ENCODE measurements at regions of chr7 and their contacts with region 1.

Region 1: DNA sequence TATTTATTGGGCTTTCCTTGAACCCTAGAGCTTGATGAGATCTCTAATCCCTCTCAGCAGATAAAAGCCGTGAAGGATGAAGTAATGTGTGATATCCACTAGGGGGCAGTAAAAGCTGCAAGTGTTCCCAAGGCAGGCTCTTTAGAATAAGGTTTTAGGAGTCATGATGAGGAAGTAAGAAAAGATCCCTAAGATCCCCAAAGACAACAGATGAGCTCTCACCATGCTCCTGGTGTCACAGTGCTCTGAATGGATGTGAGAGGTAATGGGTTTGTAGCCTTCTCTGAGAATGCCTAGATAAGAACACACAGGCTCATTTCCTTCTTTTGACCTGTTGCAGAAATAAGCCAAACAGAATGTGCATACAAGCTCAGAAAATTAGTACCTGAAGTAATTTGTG is 70.4 kb upstream of the ITPRID1 start:
- DNase-seq: peak in 1 of 10 donors; percentile 18
- H3K4me3 ChIP-seq: no peak overlapping the region
- H3K27ac ChIP-seq: no peak overlapping the region
- H3K27me3 ChIP-seq: peaks cover 0 to 20% (median 0%) of the 10 kb centered on the region in 45 donors
- CTCF ChIP-seq: peak; percentile 70 to 93 (median 85)

Region 2: GRCh38 chr7:31234836-31235605 is 208.4 kb before region 1 on chr7:
- intact Hi-C with region 1: no loop called
- DNase-seq: no peak
- H3K4me3 ChIP-seq: no peak overlapping the region
- H3K27ac ChIP-seq: no peak overlapping the region
- H3K27me3 ChIP-seq: no peaks in the 10 kb centered on the region
- CTCF ChIP-seq: no peak

Region 3: GRCh38 chr7:31493714-31494181 is 50.3 kb after region 1 on chr7:
- intact Hi-C with region 1: loop called in 1 of 2 experiments (anchors 5 kb)
- DNase-seq: no peak
- H3K4me3 ChIP-seq: no peak overlapping the region
- H3K27ac ChIP-seq: no peak overlapping the region
- H3K27me3 ChIP-seq: peaks cover 0 to 9% (median 0%) of the 10 kb centered on the region in 45 donors
- CTCF ChIP-seq: no peak

Region 4: DNA sequence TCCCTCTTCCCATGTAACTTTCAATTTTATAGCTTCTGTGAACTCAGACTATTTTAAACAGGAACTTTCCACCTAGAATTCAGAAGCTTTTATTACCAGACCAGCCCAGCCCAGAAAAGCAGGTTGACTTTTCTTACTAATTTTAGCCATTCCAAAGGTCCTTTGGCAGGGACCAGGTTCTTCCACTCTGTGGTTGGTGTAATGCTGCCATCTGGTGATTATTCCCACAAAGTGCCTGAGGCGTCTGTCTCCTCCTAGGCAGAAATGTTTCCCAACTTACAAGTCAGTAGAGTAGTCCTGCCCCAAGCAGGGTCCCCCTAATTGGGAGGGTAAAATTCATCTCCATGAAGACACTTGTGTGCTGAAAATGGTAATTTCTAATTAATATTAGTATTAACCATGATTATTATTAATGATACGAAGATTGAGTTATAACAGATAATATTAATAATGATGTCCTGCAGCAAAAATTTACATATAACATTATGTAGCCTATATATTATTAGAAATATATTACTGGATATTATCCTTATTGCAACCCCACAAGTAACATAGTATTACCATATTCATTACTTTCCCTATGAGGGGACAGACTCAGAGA is 190.5 kb after region 1 on chr7:
- intact Hi-C with region 1: loop called in 1 of 2 experiments (anchors 5 kb)
- DNase-seq: peak in 9 of 10 donors; percentile 29 to 71 (median 57)
- H3K4me3 ChIP-seq: no peak overlapping the region
- H3K27ac ChIP-seq: no peak overlapping the region
- H3K27me3 ChIP-seq: no peaks in the 10 kb centered on the region
- CTCF ChIP-seq: peak; percentile 44 to 94 (median 78)

Region 5: GRCh38 chr7:31648288-31648687 is 204.8 kb after region 1 on chr7:
- intact Hi-C with region 1: loop called in 1 of 2 experiments (anchors 10 kb)
- DNase-seq: no peak
- H3K4me3 ChIP-seq: no peak overlapping the region
- H3K27ac ChIP-seq: no peak overlapping the region
- H3K27me3 ChIP-seq: peaks cover 0 to 4% (median 0%) of the 10 kb centered on the region in 45 donors
- CTCF ChIP-seq: peak in 54 of 56 donors; percentile 23 to 74 (median 53)

Measured in dorsolateral prefrontal cortex (tissue), 120 donors.